Naive thymus-derived CD4-positive, alpha-beta T cell (primary cell): ENCODE measurements at regions of chr5 and their contacts with region 1.

Region 1: GRCh38 chr5:98050583-98050982 is 722.9 kb upstream of the RGMB start:
- DNase-seq: no peak
- ATAC-seq: no peak
- H3K4me3 ChIP-seq: no peak overlapping the region
- H3K4me3 Mint-ChIP-seq: no peak overlapping the region
- H3K27ac ChIP-seq: no peak overlapping the region
- H3K27ac Mint-ChIP-seq: no peak overlapping the region
- H3K4me1 ChIP-seq: no peaks in the 10 kb centered on the region
- H3K4me1 Mint-ChIP-seq: no peaks in the 10 kb centered on the region
- H3K27me3 ChIP-seq: no peaks in the 10 kb centered on the region
- H3K27me3 Mint-ChIP-seq: peaks cover 0 to 5% (median 4%) of the 10 kb centered on the region in 5 donors

Region 2: GRCh38 chr5:98248949-98249348 is 198.4 kb after region 1 on chr5:
- CTCF ChIA-PET with region 1: no interaction called
- POLR2A ChIA-PET with region 1: no interaction called
- intact Hi-C with region 1: loop called in 1 of 2 experiments (anchors 10 kb)
- DNase-seq: no peak
- ATAC-seq: no peak
- H3K4me3 ChIP-seq: no peak overlapping the region
- H3K4me3 Mint-ChIP-seq: no peak overlapping the region
- H3K27ac ChIP-seq: no peak overlapping the region
- H3K27ac Mint-ChIP-seq: no peak overlapping the region
- H3K4me1 ChIP-seq: no peaks in the 10 kb centered on the region
- H3K4me1 Mint-ChIP-seq: no peaks in the 10 kb centered on the region
- H3K27me3 ChIP-seq: no peaks in the 10 kb centered on the region
- H3K27me3 Mint-ChIP-seq: no peaks in the 10 kb centered on the region